MCF 10A (cell line): ENCODE measurements at regions of chr7 and their contacts with region 1.

Region 1: GRCh38 chr7:32164346-32164957 is 94.2 kb upstream of the PDE1C start:
- DNase-seq: peak; percentile 84
- H3K4me3 Mint-ChIP-seq: no peak overlapping the region
- H3K27ac Mint-ChIP-seq: no peak overlapping the region
- H3K4me1 Mint-ChIP-seq: peaks cover 9% of the 10 kb centered on the region
- H3K27me3 Mint-ChIP-seq: no peaks in the 10 kb centered on the region
- CTCF ChIP-seq: peak; percentile 71

Region 2: GRCh38 chr7:31744294-31744874 is 420.1 kb before region 1 on chr7:
- CTCF ChIA-PET with region 1: interaction called, 34 read pairs
- POLR2A ChIA-PET with region 1: no interaction called
- intact Hi-C with region 1: loop called (anchors 1 kb)
- DNase-seq: peak; percentile 78
- H3K4me3 Mint-ChIP-seq: no peak overlapping the region
- H3K27ac Mint-ChIP-seq: no peak overlapping the region
- H3K4me1 Mint-ChIP-seq: peaks cover 5% of the 10 kb centered on the region
- H3K27me3 Mint-ChIP-seq: peaks cover 39% of the 10 kb centered on the region
- CTCF ChIP-seq: peak; percentile 92

Region 3: DNA sequence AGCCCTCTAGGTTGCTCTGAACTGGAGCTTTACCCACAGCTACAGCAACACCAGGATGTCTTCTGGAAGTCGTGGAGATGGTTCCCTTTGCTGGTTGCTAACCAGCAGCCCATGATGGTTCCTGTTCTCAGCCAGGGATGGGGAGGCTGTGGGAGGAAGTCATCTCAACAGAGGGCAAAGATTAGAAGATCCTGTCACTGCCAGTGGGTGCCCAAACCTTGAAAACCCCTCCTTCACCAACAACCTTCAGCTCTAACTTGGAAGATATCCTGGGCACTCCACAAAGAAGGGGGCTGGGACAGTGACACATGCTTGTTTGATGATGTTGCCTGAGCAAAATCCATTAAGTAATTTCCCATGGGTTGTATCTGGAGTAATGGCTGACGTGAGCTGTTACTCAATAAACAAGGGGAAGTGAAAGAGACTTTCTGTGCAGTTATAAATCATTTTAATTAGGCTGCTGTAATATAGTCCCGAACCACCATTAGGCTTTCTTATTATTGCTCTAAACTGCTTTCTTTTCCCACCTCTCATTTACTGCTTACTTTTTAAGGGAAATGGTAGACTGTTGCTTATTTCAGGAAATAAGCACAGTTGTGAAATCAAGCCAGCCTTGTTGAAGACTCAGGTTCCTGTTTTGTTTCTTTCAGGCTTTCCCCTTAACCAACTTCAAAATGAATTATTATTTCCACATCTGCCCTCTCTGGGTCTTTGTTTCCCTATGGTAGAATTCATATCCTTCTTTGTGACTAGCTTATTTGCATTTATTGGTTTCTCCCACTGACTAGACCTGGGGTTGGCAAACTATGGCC is 352.6 kb before region 1 on chr7:
- CTCF ChIA-PET with region 1: interaction called, 23 read pairs
- POLR2A ChIA-PET with region 1: no interaction called
- intact Hi-C with region 1: loop called (anchors 1 kb)
- DNase-seq: peak; percentile 57
- H3K4me3 Mint-ChIP-seq: no peak overlapping the region
- H3K27ac Mint-ChIP-seq: no peak overlapping the region
- H3K4me1 Mint-ChIP-seq: no peaks in the 10 kb centered on the region
- H3K27me3 Mint-ChIP-seq: no peaks in the 10 kb centered on the region
- CTCF ChIP-seq: no peak

Region 4: DNA sequence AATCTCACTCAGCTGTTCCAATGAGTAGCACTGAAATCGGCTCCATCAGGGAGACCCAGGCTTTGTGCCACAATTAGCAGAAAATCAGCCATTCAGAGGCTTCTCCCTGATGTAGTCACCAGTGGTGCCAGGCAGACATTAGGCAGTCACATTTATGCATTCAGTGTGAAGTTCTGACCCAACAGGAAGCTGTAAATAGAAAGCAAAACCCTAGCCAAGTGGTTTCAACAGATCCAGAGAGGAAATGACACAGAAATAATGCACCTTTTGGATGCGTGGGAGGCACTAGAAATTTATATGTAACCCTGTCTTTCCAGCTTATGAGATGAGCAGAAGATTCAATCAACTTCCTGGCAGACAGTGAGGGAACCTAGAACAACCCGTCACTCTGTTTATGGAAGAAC is 280.7 kb before region 1 on chr7:
- CTCF ChIA-PET with region 1: interaction called, 4 read pairs
- POLR2A ChIA-PET with region 1: interaction called, 3 read pairs
- intact Hi-C with region 1: loop called (anchors 2 kb)
- DNase-seq: peak; percentile 79
- H3K4me3 Mint-ChIP-seq: peak overlapping the region; percentile 2
- H3K27ac Mint-ChIP-seq: peak overlapping the region; percentile 55
- H3K4me1 Mint-ChIP-seq: peaks cover 21% of the 10 kb centered on the region
- H3K27me3 Mint-ChIP-seq: no peaks in the 10 kb centered on the region
- CTCF ChIP-seq: no peak

Region 5: GRCh38 chr7:32093415-32094408 is 70.7 kb before region 1 on chr7:
- CTCF ChIA-PET with region 1: no interaction called
- POLR2A ChIA-PET with region 1: no interaction called
- intact Hi-C with region 1: loop called (anchors 2 kb)
- DNase-seq: peak; percentile 99
- H3K4me3 Mint-ChIP-seq: no peak overlapping the region
- H3K27ac Mint-ChIP-seq: peak overlapping the region; percentile 54
- H3K4me1 Mint-ChIP-seq: peaks cover 46% of the 10 kb centered on the region
- H3K27me3 Mint-ChIP-seq: no peaks in the 10 kb centered on the region
- CTCF ChIP-seq: no peak

Region 6: DNA sequence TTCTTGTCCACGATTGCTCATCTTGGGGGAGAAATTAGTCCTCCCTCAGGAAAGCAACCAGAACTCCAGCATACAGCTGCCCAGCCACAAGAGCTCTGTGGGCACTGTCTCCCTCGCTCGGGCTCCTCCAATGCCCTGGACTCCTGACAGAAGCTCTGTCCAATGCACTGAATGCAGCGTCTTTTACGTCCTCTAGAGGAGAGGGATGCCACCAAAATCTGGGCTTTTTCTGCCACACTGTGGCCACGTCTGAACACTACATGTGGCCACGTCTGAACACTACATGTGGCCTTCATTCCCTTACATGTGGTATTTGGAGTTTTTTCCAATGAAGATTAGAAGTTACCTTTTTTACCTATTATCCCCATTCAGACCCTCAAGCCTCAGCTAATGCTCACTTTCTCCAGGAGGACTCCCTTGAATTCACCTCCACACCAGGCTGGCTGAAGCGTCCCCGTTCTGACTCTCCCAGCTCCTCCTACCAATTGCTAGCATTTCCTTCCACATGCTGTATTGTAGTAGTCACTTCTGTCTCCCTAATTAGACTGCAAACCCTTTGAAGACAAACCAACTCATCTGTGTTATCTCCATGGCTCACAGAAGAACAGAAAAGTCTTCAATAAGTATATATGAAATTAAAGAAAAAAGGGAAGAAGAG is 40.0 kb after region 1 on chr7:
- CTCF ChIA-PET with region 1: interaction called, 26 read pairs
- POLR2A ChIA-PET with region 1: no interaction called
- intact Hi-C with region 1: loop called (anchors 1 kb)
- DNase-seq: peak; percentile 87
- H3K4me3 Mint-ChIP-seq: peak overlapping the region; percentile 38
- H3K27ac Mint-ChIP-seq: no peak overlapping the region
- H3K4me1 Mint-ChIP-seq: no peaks in the 10 kb centered on the region
- H3K27me3 Mint-ChIP-seq: peaks cover 10% of the 10 kb centered on the region
- CTCF ChIP-seq: peak; percentile 92

Region 7: DNA sequence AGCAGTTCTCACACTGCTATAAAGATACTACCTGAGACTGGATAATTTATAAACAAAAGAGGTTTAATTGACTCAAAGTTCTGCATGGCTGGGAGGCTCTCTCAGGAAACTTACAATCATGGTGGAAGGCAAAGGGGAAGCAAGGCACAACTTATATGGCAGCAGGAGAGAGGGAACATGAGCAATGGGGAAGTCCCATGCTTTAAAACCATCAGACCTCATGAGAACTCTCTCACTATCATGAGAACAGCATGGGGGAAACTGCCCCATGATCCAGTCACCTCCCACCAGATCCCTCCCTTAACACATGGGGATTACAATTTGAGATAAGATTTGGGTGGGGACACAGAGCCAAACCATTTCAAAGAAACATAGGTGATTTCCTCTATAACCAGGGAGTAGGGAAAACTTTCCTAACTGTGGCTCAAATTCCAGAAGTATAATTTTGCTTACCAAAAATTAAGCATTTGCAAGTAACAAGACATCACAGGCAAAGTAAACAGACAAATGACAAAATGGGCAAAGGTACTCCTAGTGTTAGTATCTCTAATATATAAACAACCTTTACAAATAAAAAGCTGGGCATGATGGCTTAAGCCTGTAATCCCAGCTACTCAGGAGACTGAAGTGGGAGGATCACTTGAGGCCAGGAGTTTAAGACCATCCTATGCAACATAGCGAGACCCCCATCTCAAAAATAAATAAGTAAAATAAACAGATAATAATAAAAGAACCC is 639.1 kb after region 1 on chr7:
- CTCF ChIA-PET with region 1: no interaction called
- POLR2A ChIA-PET with region 1: no interaction called
- intact Hi-C with region 1: no loop called
- DNase-seq: no peak
- H3K4me3 Mint-ChIP-seq: no peak overlapping the region
- H3K27ac Mint-ChIP-seq: no peak overlapping the region
- H3K4me1 Mint-ChIP-seq: no peaks in the 10 kb centered on the region
- H3K27me3 Mint-ChIP-seq: no peaks in the 10 kb centered on the region
- CTCF ChIP-seq: no peak